CD8-positive, alpha-beta T cell (primary cell): ENCODE measurements at regions of chr12 and their contacts with region 1.

Region 1: GRCh38 chr12:67698672-67699581 is 50.4 kb downstream of the DYRK2 start:
- DNase-seq: peak in 8 of 9 experiments; percentile 26 to 72 (median 58)
- ATAC-seq: peak; percentile 80
- H3K4me3 ChIP-seq: peak overlapping the region; percentile 23 to 46
- H3K4me3 Mint-ChIP-seq: peak overlapping the region; percentile 82
- H3K27ac ChIP-seq: peak overlapping the region; percentile 6 to 72
- H3K27ac Mint-ChIP-seq: peak overlapping the region; percentile 89
- H3K4me1 ChIP-seq: peaks cover 28% of the 10 kb centered on the region
- H3K4me1 Mint-ChIP-seq: peaks cover 73% of the 10 kb centered on the region
- H3K27me3 ChIP-seq: no peaks in the 10 kb centered on the region
- H3K27me3 Mint-ChIP-seq: no peaks in the 10 kb centered on the region
- CTCF ChIP-seq: no peak

Region 2: DNA sequence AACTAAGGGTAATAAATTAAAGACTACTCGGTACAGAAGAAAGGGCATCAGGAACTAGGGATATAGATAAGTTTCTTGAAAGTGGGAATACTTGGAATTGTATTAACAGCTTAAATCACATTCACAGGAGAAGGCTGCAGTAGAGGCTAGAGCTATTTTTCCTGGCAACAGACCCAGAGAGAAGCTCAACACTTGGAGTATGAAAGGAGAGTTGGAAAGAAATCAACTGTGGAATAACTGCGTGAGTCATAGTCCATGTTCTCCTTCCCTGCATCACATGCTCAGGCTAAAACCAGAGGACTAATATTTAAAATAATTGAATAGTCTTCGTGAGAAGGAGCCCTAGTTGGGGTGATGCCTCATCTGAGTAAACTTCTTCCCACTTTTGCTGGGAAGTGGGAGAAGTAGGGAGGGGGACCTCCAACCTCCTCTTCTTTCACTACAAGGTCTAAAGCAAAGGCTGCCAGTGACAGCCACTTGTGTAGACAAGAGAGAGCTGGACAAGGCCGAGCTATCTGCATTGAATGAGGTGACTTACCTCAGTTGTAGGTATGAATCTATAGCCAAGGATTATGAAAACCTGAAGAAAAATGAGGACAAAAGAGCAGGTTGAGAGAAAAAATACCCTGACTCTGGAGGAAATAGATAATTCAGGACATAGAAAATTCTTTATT is 17.7 kb before region 1 on chr12:
- CTCF ChIA-PET with region 1: no interaction called
- POLR2A ChIA-PET with region 1: no interaction called
- intact Hi-C with region 1: loop called in 1 of 2 experiments (anchors 2 kb)
- DNase-seq: no peak
- ATAC-seq: no peak
- H3K4me3 ChIP-seq: no peak overlapping the region
- H3K4me3 Mint-ChIP-seq: no peak overlapping the region
- H3K27ac ChIP-seq: no peak overlapping the region
- H3K27ac Mint-ChIP-seq: peak overlapping the region; percentile 19
- H3K4me1 ChIP-seq: peaks cover 9% of the 10 kb centered on the region
- H3K4me1 Mint-ChIP-seq: peaks cover 23% of the 10 kb centered on the region
- H3K27me3 ChIP-seq: no peaks in the 10 kb centered on the region
- H3K27me3 Mint-ChIP-seq: no peaks in the 10 kb centered on the region
- CTCF ChIP-seq: no peak

Region 3: DNA sequence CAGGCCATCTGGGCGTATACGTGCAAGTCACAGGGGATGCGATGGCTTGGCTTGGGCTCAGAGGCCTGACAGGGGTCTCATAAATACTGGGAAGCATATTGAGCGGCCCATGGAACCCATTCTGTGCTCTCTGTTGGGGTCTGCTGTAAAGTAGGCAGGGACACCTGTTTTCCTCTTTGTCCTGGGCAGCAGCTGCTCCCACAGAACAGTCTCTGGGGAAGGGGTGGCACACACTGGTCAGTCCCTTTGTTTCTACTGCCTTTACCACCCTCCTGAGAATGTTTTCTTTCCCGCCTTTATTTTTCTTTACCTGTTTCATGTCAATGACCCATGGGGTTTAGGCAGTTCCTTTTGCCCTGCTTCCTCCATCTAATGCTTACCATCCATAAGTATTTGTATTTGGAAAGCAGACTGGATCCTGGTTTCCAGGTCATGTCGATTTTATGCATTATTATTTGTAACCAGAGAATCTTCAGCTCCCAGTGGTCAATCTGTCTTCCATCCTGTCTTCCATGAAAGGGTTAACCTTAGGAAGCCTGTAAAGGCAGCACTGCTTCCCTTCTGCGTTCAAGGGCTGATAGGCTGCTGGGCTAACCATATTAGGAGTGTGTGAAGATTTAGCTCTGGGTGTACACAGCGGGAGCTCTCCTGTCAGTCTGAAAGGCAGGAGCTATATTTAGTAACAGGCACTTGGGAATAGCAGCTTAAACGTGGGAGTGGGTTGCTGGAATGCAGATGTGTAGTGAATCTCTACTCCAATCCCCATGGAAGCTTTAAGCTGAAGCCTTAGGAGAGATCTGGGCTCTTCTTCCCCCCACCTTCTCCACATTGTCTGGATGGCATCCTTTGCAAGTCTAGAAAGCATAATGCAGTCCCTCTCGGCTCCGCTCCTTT is 73.6 kb after region 1 on chr12:
- CTCF ChIA-PET with region 1: no interaction called
- POLR2A ChIA-PET with region 1: no interaction called
- intact Hi-C with region 1: no loop called
- DNase-seq: no peak
- ATAC-seq: no peak
- H3K4me3 ChIP-seq: no peak overlapping the region
- H3K4me3 Mint-ChIP-seq: no peak overlapping the region
- H3K27ac ChIP-seq: no peak overlapping the region
- H3K27ac Mint-ChIP-seq: no peak overlapping the region
- H3K4me1 ChIP-seq: no peaks in the 10 kb centered on the region
- H3K4me1 Mint-ChIP-seq: no peaks in the 10 kb centered on the region
- H3K27me3 ChIP-seq: no peaks in the 10 kb centered on the region
- H3K27me3 Mint-ChIP-seq: no peaks in the 10 kb centered on the region
- CTCF ChIP-seq: no peak

Region 4: DNA sequence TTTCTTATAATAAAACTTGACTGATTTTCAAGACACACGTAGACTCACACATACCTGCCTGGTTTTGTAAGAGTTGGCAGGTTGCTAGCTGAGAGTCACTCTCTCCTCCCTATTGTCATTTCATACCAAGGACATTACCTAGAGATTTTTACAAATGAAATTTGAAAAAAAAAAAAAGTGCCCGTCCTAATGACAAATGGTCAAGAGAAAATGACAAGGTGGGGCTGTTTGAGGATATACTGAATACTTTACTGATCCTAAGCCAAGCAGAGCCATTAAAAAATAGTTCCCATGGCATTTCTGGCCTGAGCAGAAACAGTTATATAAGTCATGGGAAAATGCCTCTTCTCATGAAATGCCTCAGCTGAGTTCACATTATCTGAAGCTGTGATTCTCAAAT is 99.8 kb after region 1 on chr12:
- CTCF ChIA-PET with region 1: no interaction called
- POLR2A ChIA-PET with region 1: no interaction called
- intact Hi-C with region 1: loop called in 1 of 2 experiments (anchors 1 kb)
- DNase-seq: no peak
- ATAC-seq: no peak
- H3K4me3 ChIP-seq: no peak overlapping the region
- H3K4me3 Mint-ChIP-seq: no peak overlapping the region
- H3K27ac ChIP-seq: no peak overlapping the region
- H3K27ac Mint-ChIP-seq: no peak overlapping the region
- H3K4me1 ChIP-seq: peaks cover 11% of the 10 kb centered on the region
- H3K4me1 Mint-ChIP-seq: peaks cover 14% of the 10 kb centered on the region
- H3K27me3 ChIP-seq: no peaks in the 10 kb centered on the region
- H3K27me3 Mint-ChIP-seq: no peaks in the 10 kb centered on the region
- CTCF ChIP-seq: no peak